Activated CD4-positive, alpha-beta T cell treated with anti-CD3 and anti-CD28 coated beads for 36 hours (primary cell): ENCODE measurements at regions of chr5 and their contacts with region 1.

Region 1: GRCh38 chr5:137778772-137779564 is 24.8 kb upstream of the HNRNPA0 start:
- DNase-seq: no peak
- ATAC-seq: no peak
- H3K4me3 Mint-ChIP-seq: no peak overlapping the region
- H3K27ac Mint-ChIP-seq: no peak overlapping the region
- H3K4me1 Mint-ChIP-seq: no peaks in the 10 kb centered on the region
- H3K27me3 Mint-ChIP-seq: no peaks in the 10 kb centered on the region

Region 2: GRCh38 chr5:137651022-137651421 is 127.9 kb before region 1 on chr5:
- CTCF ChIA-PET with region 1: no interaction called
- POLR2A ChIA-PET with region 1: no interaction called
- intact Hi-C with region 1: no loop called
- DNase-seq: no peak
- ATAC-seq: no peak
- H3K4me3 Mint-ChIP-seq: no peak overlapping the region
- H3K27ac Mint-ChIP-seq: no peak overlapping the region
- H3K4me1 Mint-ChIP-seq: no peaks in the 10 kb centered on the region
- H3K27me3 Mint-ChIP-seq: no peaks in the 10 kb centered on the region

Region 3: DNA sequence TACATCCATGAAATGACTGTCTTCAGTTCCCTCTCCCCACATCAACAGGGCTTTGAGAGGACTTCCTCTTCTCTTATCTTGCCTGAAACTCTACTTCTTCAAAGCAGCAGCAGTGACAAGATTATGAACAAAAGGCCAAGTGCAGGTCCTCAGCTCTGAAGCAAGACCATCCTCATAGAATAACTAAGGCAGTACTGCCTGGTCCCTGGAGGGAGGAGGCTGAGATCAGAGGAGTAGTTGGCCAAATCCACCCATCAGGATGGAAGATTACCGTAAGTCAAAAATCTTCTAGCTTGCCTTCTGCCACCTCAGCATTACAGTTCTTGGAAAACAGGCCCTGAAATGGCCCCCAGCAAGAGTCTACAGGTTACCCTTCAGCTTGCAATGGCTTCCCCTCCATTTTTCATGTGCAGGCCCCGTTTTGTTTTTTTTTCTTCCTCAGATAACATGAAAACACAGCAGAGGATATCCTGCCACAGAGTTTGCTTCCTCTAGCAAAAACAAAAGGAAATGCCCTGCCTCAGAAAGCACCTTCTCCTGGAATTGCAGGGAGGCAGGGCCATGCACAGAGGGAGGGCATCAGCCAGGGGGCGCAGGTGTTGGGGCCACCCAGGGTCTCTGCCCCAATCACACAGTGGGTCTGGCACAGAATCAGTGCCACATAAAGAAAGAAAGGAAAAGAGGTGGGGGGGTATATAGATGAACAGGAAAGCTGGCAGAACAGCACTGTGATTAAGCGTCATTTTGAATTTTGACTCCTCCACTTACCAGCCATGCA is 83.1 kb before region 1 on chr5:
- CTCF ChIA-PET with region 1: no interaction called
- POLR2A ChIA-PET with region 1: no interaction called
- intact Hi-C with region 1: no loop called
- DNase-seq: peak; percentile 42
- ATAC-seq: peak; percentile 75
- H3K4me3 Mint-ChIP-seq: peak overlapping the region; percentile 40
- H3K27ac Mint-ChIP-seq: peak overlapping the region; percentile 89
- H3K4me1 Mint-ChIP-seq: peaks cover 51% of the 10 kb centered on the region
- H3K27me3 Mint-ChIP-seq: no peaks in the 10 kb centered on the region

Region 4: DNA sequence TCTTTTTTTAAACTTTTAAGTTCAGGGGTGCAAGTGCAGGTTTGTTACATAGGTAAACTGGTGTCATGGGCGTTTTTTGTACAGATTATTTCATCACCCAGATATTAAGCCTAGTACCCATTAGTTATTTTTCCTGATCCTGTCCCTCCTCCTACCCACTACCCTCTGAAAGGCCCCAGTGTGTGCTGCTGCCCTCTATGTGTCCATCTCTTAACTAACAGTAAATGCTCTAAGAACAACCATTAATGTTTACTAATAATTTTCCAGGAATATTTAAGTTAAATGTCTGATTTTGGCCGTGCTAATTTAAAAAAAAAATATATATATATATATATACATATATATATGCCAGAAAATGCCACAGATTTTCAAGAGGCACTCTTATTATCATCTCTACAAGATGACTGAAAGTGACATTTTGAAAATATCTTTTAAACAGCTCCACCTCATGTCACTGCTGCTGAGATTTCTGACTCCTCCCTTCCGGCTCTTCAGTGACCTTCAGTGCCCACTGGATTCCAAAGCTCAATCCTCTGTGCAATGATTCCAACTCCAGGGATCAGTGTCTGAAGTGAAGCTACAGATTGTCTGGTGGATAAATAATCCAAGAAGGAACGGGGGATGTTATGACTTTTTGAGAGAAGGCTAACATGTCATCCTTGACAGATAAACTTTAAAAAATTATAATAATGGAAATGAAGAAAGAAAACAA is 21.9 kb after region 1 on chr5:
- CTCF ChIA-PET with region 1: interaction called, 10 read pairs
- POLR2A ChIA-PET with region 1: no interaction called
- intact Hi-C with region 1: no loop called
- DNase-seq: no peak
- ATAC-seq: no peak
- H3K4me3 Mint-ChIP-seq: no peak overlapping the region
- H3K27ac Mint-ChIP-seq: no peak overlapping the region
- H3K4me1 Mint-ChIP-seq: no peaks in the 10 kb centered on the region
- H3K27me3 Mint-ChIP-seq: no peaks in the 10 kb centered on the region

Region 5: GRCh38 chr5:137867664-137868063 is 88.7 kb after region 1 on chr5 and contains the start of gene MYOT:
- CTCF ChIA-PET with region 1: no interaction called
- POLR2A ChIA-PET with region 1: no interaction called
- intact Hi-C with region 1: no loop called
- DNase-seq: no peak
- ATAC-seq: no peak
- H3K4me3 Mint-ChIP-seq: no peak within 1 kb of the TSS
- H3K27ac Mint-ChIP-seq: no peak within 1 kb of the TSS
- H3K4me1 Mint-ChIP-seq: no peaks in the 10 kb centered on the region
- H3K27me3 Mint-ChIP-seq: no peaks in the 10 kb centered on the region
- total RNA-seq, gene MYOT: not detected

Region 6: GRCh38 chr5:137888857-137889759 is 110.1 kb after region 1 on chr5 and contains the start of gene PKD2L2:
- CTCF ChIA-PET with region 1: interaction called, 10 read pairs
- POLR2A ChIA-PET with region 1: no interaction called
- intact Hi-C with region 1: loop called in 1 of 2 experiments (anchors 5 kb)
- DNase-seq: peak; percentile 93
- ATAC-seq: peak; percentile 99
- H3K4me3 Mint-ChIP-seq: peak within 1 kb of the TSS; percentile 92
- H3K27ac Mint-ChIP-seq: peak within 1 kb of the TSS; percentile 93
- H3K4me1 Mint-ChIP-seq: peaks cover 21% of the 10 kb centered on the region
- H3K27me3 Mint-ChIP-seq: no peaks in the 10 kb centered on the region
- total RNA-seq, gene PKD2L2: 0.30 TPM in 1 of 2 experiments, not detected in the other

Region 7: GRCh38 chr5:137935190-137935589 is 156.2 kb after region 1 on chr5:
- CTCF ChIA-PET with region 1: no interaction called
- POLR2A ChIA-PET with region 1: no interaction called
- intact Hi-C with region 1: loop called in 1 of 2 experiments (anchors 5 kb)
- DNase-seq: no peak
- ATAC-seq: no peak
- H3K4me3 Mint-ChIP-seq: no peak overlapping the region
- H3K27ac Mint-ChIP-seq: no peak overlapping the region
- H3K4me1 Mint-ChIP-seq: peaks cover 28% of the 10 kb centered on the region
- H3K27me3 Mint-ChIP-seq: no peaks in the 10 kb centered on the region

Region 8: GRCh38 chr5:138065102-138065501 is 286.1 kb after region 1 on chr5:
- CTCF ChIA-PET with region 1: interaction called, 31 read pairs
- POLR2A ChIA-PET with region 1: no interaction called
- intact Hi-C with region 1: loop called (anchors 1 kb)
- DNase-seq: peak; percentile 40
- ATAC-seq: no peak
- H3K4me3 Mint-ChIP-seq: no peak overlapping the region
- H3K27ac Mint-ChIP-seq: no peak overlapping the region
- H3K4me1 Mint-ChIP-seq: peaks cover 4% of the 10 kb centered on the region
- H3K27me3 Mint-ChIP-seq: no peaks in the 10 kb centered on the region